WTC11 (cell line): ENCODE measurements at regions of chr5 and their contacts with region 1.

Region 1: GRCh38 chr5:82312373-82312856 is 34.3 kb upstream of the RPS23 start:
- DNase-seq: peak; percentile 73
- ATAC-seq: peak; percentile 83
- H3K4me3 Mint-ChIP-seq: no peak overlapping the region
- H3K27ac Mint-ChIP-seq: no peak overlapping the region
- H3K4me1 Mint-ChIP-seq: peaks cover 19% of the 10 kb centered on the region
- H3K27me3 Mint-ChIP-seq: peaks cover 12% of the 10 kb centered on the region
- CTCF ChIP-seq: peak; percentile 68

Region 2: DNA sequence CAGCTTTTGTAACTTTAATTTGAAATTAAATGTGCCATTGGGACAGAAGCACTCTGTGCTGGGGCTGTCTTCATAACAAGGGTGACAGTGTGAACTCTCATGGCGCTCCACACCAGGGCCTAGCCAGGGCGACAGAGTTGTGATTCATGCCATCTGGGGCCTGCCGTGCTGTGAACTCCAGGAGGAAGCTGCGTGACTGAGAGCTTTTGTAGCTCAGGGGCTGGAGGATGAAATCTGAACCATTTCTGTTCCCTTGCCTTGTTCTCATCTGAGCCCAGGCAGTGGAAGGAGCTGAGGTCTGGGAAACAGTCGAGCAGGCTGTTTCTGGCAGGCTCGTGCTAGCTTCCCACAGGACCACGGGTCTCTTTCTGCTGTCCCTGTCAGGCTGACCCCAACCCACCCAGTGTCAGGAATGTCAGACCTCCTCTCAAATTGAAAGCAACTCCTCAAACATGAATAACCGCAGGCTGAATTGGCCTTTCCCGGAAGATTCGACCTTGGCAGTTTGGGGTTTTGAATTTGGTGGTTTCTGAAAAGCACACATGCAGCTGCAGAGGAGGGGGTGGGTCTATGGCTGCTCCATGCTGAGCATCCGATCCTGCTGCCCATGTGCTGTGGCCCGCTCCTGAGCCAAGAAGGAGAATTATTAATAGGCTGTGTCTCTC is 34.9 kb after region 1 on chr5:
- CTCF ChIA-PET with region 1: interaction called, 17 read pairs
- POLR2A ChIA-PET with region 1: no interaction called
- DNase-seq: no peak
- ATAC-seq: peak; percentile 9
- H3K4me3 Mint-ChIP-seq: no peak overlapping the region
- H3K27ac Mint-ChIP-seq: no peak overlapping the region; the same call in 1 of the 2 replicates
- H3K4me1 Mint-ChIP-seq: peaks cover 17% of the 10 kb centered on the region
- H3K27me3 Mint-ChIP-seq: no peaks in the 10 kb centered on the region
- CTCF ChIP-seq: no peak

Region 3: DNA sequence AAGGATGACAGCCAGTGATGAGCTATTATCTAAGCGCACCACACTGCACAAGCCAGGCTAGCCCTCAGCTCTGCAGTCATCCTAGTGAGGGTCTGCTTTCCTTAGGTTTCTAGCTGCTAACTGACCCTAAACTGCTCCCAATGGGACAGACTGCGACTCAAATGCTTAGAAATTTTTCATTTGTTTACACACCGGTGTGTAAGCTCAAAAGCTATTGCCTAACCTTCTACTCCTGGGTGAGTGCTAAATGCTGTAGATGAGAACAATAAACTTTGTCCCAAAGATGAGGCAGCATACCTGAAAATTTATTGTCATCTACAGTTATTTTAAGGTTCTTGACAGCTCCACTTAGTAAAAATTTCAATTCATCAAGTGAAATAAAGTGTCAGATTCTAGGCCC is 453.4 kb after region 1 on chr5:
- CTCF ChIA-PET with region 1: no interaction called
- POLR2A ChIA-PET with region 1: no interaction called
- DNase-seq: no peak
- ATAC-seq: no peak
- H3K4me3 Mint-ChIP-seq: no peak overlapping the region
- H3K27ac Mint-ChIP-seq: no peak overlapping the region
- H3K4me1 Mint-ChIP-seq: peaks cover 8% of the 10 kb centered on the region
- H3K27me3 Mint-ChIP-seq: no peaks in the 10 kb centered on the region
- CTCF ChIP-seq: no peak